Activated naive CD4-positive, alpha-beta T cell treated with anti-CD3 and anti-CD28 coated beads for 36 hours (primary cell): ENCODE measurements at regions of chr6 and their contacts with region 1.

Region 1: GRCh38 chr6:118776607-118777549 is 117.1 kb upstream of the ASF1A start:
- DNase-seq: peak; percentile 85
- H3K4me3 Mint-ChIP-seq: no peak overlapping the region
- H3K27ac Mint-ChIP-seq: peak overlapping the region; percentile 47
- H3K4me1 Mint-ChIP-seq: peaks cover 23% of the 10 kb centered on the region
- H3K27me3 Mint-ChIP-seq: no peaks in the 10 kb centered on the region

Region 2: GRCh38 chr6:118283766-118284165 is 493.1 kb before region 1 on chr6:
- CTCF ChIA-PET with region 1: no interaction called
- intact Hi-C with region 1: loop called (anchors 2 kb)
- DNase-seq: peak; percentile 69
- H3K4me3 Mint-ChIP-seq: no peak overlapping the region
- H3K27ac Mint-ChIP-seq: no peak overlapping the region
- H3K4me1 Mint-ChIP-seq: peaks cover 2% of the 10 kb centered on the region
- H3K27me3 Mint-ChIP-seq: peaks cover 3% of the 10 kb centered on the region

Region 3: GRCh38 chr6:118523216-118523615 is 253.7 kb before region 1 on chr6:
- CTCF ChIA-PET with region 1: no interaction called
- intact Hi-C with region 1: no loop called
- DNase-seq: no peak
- H3K4me3 Mint-ChIP-seq: no peak overlapping the region
- H3K27ac Mint-ChIP-seq: no peak overlapping the region
- H3K4me1 Mint-ChIP-seq: peaks cover 33% of the 10 kb centered on the region
- H3K27me3 Mint-ChIP-seq: no peaks in the 10 kb centered on the region

Region 4: GRCh38 chr6:118565311-118565960 is 211.4 kb before region 1 on chr6:
- CTCF ChIA-PET with region 1: interaction called, 15 read pairs
- intact Hi-C with region 1: loop called (anchors 1 kb)
- DNase-seq: peak; percentile 26
- H3K4me3 Mint-ChIP-seq: no peak overlapping the region
- H3K27ac Mint-ChIP-seq: peak overlapping the region; percentile 12
- H3K4me1 Mint-ChIP-seq: peaks cover 28% of the 10 kb centered on the region
- H3K27me3 Mint-ChIP-seq: no peaks in the 10 kb centered on the region

Region 5: DNA sequence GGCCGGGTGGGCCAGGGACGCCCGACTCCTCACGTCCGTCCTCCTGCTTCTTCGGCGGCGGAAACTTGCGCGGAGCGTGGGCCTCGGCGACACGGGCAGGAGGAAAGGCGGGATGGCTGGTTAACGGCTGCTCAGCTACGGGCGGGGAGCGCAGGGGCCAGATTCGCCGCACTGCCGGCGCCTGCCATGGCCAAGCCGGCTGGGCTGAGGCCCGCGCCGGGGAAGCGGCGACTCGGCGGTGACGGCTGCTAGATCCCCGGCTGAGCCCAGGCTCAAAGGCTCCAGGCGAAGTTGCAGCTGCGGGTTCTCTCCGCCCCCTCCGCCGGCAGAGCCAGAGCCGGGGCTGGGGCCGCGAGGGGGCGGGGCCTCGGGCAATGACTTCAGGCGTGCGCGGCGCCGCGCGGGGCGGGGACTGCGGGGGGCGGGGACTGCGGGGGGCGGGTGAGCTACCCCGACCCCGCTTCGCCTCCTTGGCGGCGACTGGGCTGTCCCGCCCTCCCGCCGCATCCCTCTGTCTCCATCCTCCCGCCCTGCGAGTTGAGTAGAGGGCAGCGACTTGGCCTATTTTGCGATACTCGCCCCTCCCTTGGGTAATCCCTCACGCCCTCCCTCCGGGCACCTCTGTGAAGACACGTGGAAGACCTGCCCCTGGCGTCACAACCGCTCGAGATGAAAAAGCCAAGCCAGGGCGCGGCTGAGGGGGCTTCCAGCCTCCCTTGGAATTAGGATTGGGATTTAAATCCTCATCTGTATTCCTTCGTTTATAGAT is 125.4 kb before region 1 on chr6 and contains the start of gene CEP85L:
- CTCF ChIA-PET with region 1: no interaction called
- intact Hi-C with region 1: loop called (anchors 1 kb)
- DNase-seq: peak; percentile 90
- H3K4me3 Mint-ChIP-seq: peak within 1 kb of the TSS; percentile 86
- H3K27ac Mint-ChIP-seq: peak within 1 kb of the TSS; percentile 89
- H3K4me1 Mint-ChIP-seq: peaks cover 49% of the 10 kb centered on the region
- H3K27me3 Mint-ChIP-seq: no peaks in the 10 kb centered on the region
- total RNA-seq, gene CEP85L: 31.4 to 31.9 TPM

Region 6: DNA sequence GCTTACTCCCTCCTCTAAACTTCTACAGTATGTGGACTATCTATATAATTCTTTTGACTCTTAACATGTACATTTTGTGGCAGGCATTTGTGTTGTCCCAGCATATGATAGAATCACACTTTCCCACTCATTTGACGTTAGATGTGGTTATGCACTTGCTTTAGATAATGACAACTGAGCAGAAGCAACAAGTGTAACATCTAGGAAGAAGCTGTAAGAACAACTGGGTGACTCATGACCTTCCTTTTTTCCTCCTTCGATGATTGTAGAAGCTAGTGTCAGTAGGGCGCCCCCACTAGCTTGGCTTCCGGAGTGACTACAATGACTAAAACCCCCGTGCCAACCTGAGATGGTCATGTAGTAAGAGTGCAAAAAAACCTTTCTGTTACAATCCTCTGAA is 50.9 kb before region 1 on chr6:
- CTCF ChIA-PET with region 1: interaction called, 8 read pairs
- intact Hi-C with region 1: loop called (anchors 1 kb)
- DNase-seq: peak; percentile 93
- H3K4me3 Mint-ChIP-seq: peak overlapping the region; percentile 26
- H3K27ac Mint-ChIP-seq: peak overlapping the region; percentile 91
- H3K4me1 Mint-ChIP-seq: peaks cover 55% of the 10 kb centered on the region
- H3K27me3 Mint-ChIP-seq: no peaks in the 10 kb centered on the region

Region 7: GRCh38 chr6:118787724-118788423 is 11.0 kb after region 1 on chr6:
- CTCF ChIA-PET with region 1: interaction called, 17 read pairs
- intact Hi-C with region 1: no loop called
- DNase-seq: peak; percentile 27
- H3K4me3 Mint-ChIP-seq: no peak overlapping the region
- H3K27ac Mint-ChIP-seq: no peak overlapping the region
- H3K4me1 Mint-ChIP-seq: peaks cover 47% of the 10 kb centered on the region
- H3K27me3 Mint-ChIP-seq: no peaks in the 10 kb centered on the region